ENCODE measurements at regions of chr12 and their contacts with region 1.

Region 1: GRCh38 chr12:96177013-96177412 is 17.2 kb upstream of the ELK3 start:
- DNase-seq: peak; percentile 69
- H3K4me3 Mint-ChIP-seq: no peak overlapping the region
- H3K27ac Mint-ChIP-seq: peak overlapping the region; percentile 94
- H3K4me1 Mint-ChIP-seq: peaks cover 24% of the 10 kb centered on the region
- H3K27me3 Mint-ChIP-seq: no peaks in the 10 kb centered on the region

Region 2: GRCh38 chr12:96153131-96153725 is 23.8 kb before region 1 on chr12:
- CTCF ChIA-PET with region 1: no interaction called
- POLR2A ChIA-PET with region 1: no interaction called
- DNase-seq: no peak
- H3K4me3 Mint-ChIP-seq: no peak overlapping the region
- H3K27ac Mint-ChIP-seq: no peak overlapping the region
- H3K4me1 Mint-ChIP-seq: no peaks in the 10 kb centered on the region
- H3K27me3 Mint-ChIP-seq: no peaks in the 10 kb centered on the region

Region 3: DNA sequence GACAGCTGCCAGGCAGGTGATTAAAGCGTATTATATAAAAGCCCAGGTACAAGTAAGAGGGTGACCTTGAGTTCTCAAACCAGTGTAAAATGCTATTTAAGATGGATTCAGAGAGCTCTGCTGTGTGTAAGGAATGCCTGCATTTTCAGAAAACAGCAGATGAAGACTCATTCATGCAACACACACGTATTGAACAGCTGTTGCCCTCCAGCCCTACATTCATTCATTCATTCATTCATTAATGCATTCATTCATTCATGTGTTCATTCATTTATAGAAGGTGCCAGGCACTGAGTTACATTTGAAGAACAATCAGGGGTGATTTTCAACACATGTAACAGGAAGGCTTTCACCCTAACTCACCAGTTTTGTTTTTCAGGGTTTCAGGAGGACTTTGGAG is 10.2 kb before region 1 on chr12:
- CTCF ChIA-PET with region 1: interaction called, 10 read pairs
- POLR2A ChIA-PET with region 1: no interaction called
- DNase-seq: no peak
- H3K4me3 Mint-ChIP-seq: no peak overlapping the region
- H3K27ac Mint-ChIP-seq: no peak overlapping the region
- H3K4me1 Mint-ChIP-seq: no peaks in the 10 kb centered on the region
- H3K27me3 Mint-ChIP-seq: no peaks in the 10 kb centered on the region